GM13977 (cell line): ENCODE measurements at regions of chr10 and their contacts with region 1.

Region 1: DNA sequence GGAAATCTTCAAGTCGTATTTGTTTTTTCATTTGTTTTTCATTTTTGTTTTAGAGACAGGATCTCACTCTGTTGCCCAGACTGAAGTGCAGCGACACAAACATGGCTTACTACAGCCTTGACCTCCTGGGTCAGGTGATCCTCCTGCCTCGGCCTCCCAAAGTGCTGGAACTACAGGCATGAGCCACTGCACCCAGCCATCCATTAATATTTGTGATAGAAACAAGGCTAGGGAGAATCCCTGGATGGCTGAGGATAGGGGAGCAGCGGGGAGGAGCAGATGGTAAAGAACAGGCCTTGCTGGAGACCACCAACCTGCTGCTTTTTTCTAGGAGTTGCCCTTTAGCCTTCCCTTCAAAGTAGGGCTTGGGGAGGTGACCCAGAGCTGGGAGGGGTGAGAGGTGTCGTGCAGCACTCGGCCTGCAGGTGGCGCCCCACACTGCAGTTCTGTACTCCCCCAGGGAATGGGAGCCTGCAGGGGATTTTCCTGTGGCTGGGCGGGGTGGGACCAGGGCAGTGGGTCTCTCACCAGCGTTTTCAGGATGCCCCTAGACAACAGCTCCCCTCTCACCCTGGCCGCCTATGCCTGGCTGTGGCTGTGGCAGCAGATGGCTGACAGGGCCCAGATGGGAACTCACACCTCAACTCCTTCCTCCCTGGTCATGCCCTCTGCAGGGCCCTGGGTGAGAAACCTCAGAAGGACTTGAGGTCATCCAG is 12.6 kb upstream of the CDH23 start:
- DNase-seq: peak; percentile 77
- CTCF ChIP-seq: peak; percentile 96

Region 2: DNA sequence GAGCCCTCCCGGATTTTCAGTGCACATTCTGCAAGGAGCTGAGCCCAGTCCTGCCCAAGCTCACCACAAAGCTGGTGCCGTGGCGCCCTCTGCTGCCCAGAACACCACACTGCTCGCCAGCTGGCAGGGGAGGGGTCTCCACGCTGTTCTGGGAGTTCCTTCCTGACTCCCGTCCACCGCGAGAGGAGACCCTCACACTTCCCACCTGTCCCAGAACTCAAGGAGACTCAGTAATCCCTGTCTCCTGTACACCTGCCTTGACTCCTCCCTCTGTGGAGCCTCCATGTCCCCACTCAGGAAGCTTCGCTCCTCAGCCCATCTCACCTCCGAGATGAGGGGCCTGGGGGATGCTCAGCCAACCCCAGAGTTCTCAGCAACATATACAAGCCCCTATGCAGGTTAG is 324.2 kb after region 1 on chr10:
- in situ Hi-C with region 1: loop called (anchors 10 kb)
- DNase-seq: peak; percentile 82
- CTCF ChIP-seq: peak; percentile 96